Astrocyte of the cerebellum (primary cell): ENCODE measurements at regions of chr2 and their contacts with region 1.

Region 1: DNA sequence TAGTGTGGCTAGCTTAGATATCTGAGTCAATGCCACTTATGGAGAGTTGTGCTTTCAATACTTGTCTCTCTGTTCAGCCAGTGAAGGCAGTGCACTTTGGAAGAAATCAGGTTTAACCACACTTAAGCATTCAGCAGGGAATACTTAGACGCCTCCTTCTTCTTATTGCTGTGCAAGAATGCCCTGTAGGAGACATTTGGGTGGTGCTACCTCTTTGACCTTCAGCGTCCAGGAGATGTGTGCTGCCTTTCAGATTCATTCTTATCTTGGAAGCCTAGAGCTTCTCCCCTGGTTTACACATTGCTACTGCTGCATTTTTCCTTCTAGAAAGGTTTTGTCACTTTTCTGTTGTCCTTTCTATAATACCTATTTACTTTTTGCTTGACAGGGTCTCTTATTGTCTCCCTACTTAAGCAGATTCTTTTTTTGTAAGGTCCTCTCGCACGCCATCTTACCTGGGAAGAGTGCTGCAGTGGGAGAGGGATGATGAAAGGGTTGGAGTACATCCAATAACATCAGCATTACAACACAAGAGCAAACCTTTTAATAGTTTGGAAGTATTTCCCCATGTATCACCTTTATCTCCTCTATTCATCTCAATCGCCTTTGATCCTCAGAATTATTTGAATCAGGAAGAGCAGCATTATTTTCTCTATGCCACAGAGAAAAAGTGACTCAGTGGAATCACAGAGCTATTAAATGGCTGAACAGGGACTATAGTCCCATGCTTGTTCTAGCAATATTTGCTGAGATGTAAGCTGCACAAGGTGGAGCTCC is 350.7 kb downstream of the ARL6IP6 start:
- DNase-seq: no peak
- H3K4me3 ChIP-seq: no peak overlapping the region
- CTCF ChIP-seq: no peak

Region 2: DNA sequence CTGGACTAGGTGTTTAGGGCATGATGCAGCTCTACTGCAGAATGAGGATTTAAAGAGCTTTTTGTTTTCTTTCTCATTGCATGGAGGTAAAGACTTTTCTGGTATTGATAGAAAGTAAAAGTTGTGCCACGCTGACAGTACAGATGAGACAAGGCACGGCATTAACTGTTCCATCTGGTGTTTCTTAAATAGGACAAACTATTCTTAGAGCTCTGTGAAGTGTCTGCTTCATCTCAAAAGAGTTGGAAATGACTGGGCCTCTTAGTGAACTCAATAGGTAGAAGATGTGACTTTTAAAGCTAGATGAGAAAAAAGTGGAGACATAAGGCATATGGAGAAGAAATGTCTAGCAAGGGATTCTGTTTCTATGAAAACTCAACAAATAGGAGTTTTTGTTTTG is 87.6 kb after region 1 on chr2:
- in situ Hi-C with region 1: loop called (anchors 5 kb)
- DNase-seq: no peak
- H3K4me3 ChIP-seq: no peak overlapping the region
- CTCF ChIP-seq: no peak

Region 3: DNA sequence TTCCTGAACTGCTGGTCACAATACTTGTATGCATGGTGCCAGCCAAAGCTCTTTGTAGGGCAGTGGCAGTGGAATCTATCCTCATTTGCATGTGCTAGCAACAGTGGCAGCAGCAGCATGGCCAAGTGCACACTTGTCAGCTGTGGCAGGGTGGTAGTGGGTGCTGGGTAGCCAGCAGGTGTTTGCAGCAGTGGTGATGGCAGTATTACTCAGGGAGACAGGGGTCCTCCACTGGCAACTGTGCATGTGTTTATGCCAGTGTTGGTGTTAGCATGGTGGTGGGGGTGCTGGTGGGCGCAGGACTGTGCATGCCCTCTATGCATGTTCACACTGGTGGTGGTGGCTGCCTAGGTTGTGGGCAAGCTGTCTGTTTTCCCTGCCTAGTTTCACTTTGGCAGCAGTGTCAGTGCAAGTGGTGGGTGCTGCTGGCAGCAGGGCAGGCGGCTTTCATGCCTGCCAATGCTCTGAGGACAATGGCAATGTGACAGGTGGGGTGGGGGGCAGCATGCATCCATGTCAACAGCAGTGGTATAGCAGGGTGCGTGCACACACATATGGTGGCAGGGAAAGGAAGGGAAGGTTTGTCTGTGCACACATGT is 843.8 kb after region 1 on chr2:
- in situ Hi-C with region 1: no loop called
- DNase-seq: no peak
- H3K4me3 ChIP-seq: no peak overlapping the region
- CTCF ChIP-seq: no peak